A673 (cell line): ENCODE measurements at regions of chrX and their contacts with region 1.

Region 1: GRCh38 chrX:152652467-152652866 is 14.8 kb downstream of the GABRQ start:
- DNase-seq: no peak
- H3K4me3 ChIP-seq: no peak overlapping the region
- H3K27ac ChIP-seq: no peak overlapping the region
- H3K4me1 ChIP-seq: no peaks in the 10 kb centered on the region
- H3K27me3 ChIP-seq: peaks cover 23% of the 10 kb centered on the region
- CTCF ChIP-seq: no peak

Region 2: GRCh38 chrX:152810403-152810802 is 157.9 kb after region 1 on chrX:
- CTCF ChIA-PET with region 1: no interaction called
- POLR2A ChIA-PET with region 1: no interaction called
- intact Hi-C with region 1: loop called (anchors 5 kb)
- DNase-seq: no peak
- H3K4me3 ChIP-seq: no peak overlapping the region
- H3K27ac ChIP-seq: no peak overlapping the region
- H3K4me1 ChIP-seq: no peaks in the 10 kb centered on the region
- H3K27me3 ChIP-seq: peaks cover 27% of the 10 kb centered on the region
- CTCF ChIP-seq: no peak

Region 3: DNA sequence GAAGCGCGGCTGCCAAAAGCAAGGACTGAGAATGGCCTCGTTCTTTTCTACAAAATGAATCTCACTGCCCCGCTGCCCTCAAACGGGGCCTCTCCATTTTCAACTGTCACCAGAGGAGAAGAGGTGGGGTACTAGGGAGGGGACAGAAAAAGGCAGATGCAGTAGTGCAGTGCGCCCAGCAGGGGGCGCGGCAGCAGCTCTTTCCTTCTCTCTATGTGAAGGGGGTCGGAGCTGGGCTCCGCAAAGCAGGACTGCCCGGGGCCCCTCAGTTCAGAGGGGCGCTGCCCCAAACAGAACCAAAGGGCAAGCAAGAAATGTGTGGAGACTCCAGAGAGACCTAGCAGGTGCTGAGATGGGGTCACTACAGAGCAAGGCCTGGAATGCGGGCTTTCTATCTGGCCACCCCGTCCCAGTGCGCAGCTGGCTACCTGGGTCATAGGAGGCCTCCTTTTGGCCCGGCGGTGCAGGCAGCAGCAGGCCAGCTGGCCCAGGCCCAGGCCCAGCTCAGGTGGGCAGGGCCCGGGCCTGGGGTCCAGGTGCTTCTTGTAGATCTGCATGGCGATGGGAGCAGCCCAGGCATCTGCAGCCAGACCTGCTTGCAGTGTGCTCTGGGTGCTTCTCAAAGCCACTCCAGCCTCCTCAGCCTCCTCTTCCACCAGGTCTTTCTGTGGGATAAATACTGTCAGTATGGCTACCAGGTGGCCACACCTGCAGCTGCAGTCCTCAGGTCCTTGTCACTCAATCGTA is 1361.3 kb after region 1 on chrX:
- CTCF ChIA-PET with region 1: no interaction called
- POLR2A ChIA-PET with region 1: no interaction called
- intact Hi-C with region 1: no loop called
- DNase-seq: peak; percentile 65
- H3K4me3 ChIP-seq: no peak overlapping the region
- H3K27ac ChIP-seq: no peak overlapping the region
- H3K4me1 ChIP-seq: no peaks in the 10 kb centered on the region
- H3K27me3 ChIP-seq: no peaks in the 10 kb centered on the region
- CTCF ChIP-seq: peak; percentile 96